ENCODE measurements at regions of chr10 and their contacts with region 1.

Region 1: DNA sequence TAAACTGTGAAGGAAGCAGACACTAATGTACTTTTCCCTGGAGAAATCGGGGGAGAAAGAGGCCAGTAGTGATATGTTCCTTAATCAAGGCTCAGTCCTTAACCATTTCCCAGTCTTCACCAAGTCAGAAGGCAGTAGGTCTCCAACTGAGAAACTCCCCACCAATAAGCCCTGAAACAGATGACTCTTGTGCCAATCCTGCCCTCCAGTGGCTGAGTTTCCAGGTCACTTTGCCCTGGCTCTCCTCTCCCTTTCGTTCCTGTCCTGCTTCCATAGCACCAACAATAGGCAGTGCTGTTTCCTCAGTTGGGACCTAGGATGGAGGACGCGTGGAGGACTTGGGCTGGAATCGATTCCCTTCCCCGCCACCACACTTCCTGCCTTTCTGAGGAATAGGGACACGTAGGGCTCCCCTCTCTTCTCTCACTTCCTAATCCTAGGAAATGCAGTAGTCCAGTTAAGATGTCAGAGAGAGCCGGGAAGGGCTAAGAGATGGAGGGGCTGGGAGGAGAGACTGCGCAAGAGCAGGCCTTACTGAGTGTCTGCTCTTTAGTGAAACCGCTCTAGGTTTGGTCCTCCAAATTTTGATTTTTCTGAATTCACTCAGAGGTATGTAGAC is 23.4 kb downstream of the ATOH7 start:
- DNase-seq: peak; percentile 57
- H3K4me3 Mint-ChIP-seq: no peak overlapping the region
- H3K27ac Mint-ChIP-seq: no peak overlapping the region
- H3K4me1 Mint-ChIP-seq: no peaks in the 10 kb centered on the region
- H3K27me3 Mint-ChIP-seq: peaks cover 8% of the 10 kb centered on the region

Region 2: DNA sequence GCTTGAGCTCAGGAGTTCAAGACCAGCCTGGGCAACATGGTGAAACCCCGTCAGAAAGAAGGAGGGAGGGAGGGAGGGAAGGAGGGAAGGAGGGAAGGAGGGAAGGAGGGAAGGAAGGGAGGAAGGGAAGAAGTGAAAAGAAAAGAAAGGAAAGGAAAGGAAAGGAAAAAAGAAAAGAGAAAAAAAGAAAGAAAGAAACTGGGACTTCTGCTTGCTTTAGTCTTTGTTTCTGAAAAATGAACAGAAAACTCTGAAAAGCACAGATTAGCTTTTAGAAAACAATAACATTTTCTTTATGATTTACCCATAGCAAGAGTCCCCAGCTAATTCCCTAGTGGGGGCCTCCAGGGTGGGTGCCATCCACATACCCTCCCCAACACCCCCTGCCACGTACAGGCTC is 23.4 kb before region 1 on chr10:
- CTCF ChIA-PET with region 1: no interaction called
- POLR2A ChIA-PET with region 1: no interaction called
- intact Hi-C with region 1: no loop called
- DNase-seq: no peak
- H3K4me3 Mint-ChIP-seq: no peak overlapping the region
- H3K27ac Mint-ChIP-seq: no peak overlapping the region
- H3K4me1 Mint-ChIP-seq: no peaks in the 10 kb centered on the region
- H3K27me3 Mint-ChIP-seq: peaks cover 22% of the 10 kb centered on the region

Region 3: GRCh38 chr10:68196701-68197100 is 11.8 kb before region 1 on chr10:
- CTCF ChIA-PET with region 1: interaction called, 13 read pairs
- POLR2A ChIA-PET with region 1: no interaction called
- intact Hi-C with region 1: no loop called
- DNase-seq: no peak
- H3K4me3 Mint-ChIP-seq: no peak overlapping the region
- H3K27ac Mint-ChIP-seq: no peak overlapping the region
- H3K4me1 Mint-ChIP-seq: no peaks in the 10 kb centered on the region
- H3K27me3 Mint-ChIP-seq: peaks cover 29% of the 10 kb centered on the region

Region 4: GRCh38 chr10:68223535-68224165 is 15.1 kb after region 1 on chr10:
- CTCF ChIA-PET with region 1: interaction called, 18 read pairs
- POLR2A ChIA-PET with region 1: no interaction called
- intact Hi-C with region 1: no loop called
- DNase-seq: peak; percentile 12
- H3K4me3 Mint-ChIP-seq: no peak overlapping the region
- H3K27ac Mint-ChIP-seq: no peak overlapping the region
- H3K4me1 Mint-ChIP-seq: no peaks in the 10 kb centered on the region
- H3K27me3 Mint-ChIP-seq: peaks cover 6% of the 10 kb centered on the region

Region 5: DNA sequence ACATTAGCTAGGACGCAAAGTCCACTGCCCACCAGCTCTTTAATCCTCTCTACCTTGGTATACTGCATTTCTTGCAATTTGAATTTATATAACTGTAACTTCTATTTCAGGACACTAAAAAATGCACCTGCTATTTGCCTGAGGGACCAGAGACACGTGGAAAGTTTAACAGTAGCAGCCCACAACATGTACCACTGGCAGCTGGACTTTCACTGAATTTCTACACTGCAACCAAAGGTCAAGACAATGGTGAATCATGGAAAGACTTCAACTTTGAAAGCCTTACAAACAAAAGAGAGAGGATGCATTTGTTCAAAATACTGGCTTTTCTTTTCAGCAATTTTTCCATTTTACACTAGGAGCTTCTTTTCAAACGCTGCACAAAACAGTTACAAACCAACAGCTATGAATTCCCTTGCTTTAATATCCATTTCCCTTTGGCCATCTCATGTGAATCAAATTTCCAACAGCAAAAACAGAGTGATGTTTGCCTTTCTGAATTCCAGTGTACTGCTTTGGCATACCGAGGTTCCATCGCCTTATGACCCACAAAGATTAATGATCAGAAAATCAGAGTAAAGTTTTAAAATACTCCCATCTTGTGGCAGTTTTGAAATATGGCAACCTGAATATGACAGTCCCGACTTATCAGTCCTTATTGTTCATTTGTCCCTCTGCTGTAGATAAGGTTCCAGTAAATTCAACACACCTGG is 93.4 kb after region 1 on chr10:
- CTCF ChIA-PET with region 1: interaction called, 62 read pairs
- POLR2A ChIA-PET with region 1: no interaction called
- intact Hi-C with region 1: loop called (anchors 2 kb)
- DNase-seq: no peak
- H3K4me3 Mint-ChIP-seq: no peak overlapping the region
- H3K27ac Mint-ChIP-seq: no peak overlapping the region
- H3K4me1 Mint-ChIP-seq: no peaks in the 10 kb centered on the region
- H3K27me3 Mint-ChIP-seq: no peaks in the 10 kb centered on the region

Region 6: DNA sequence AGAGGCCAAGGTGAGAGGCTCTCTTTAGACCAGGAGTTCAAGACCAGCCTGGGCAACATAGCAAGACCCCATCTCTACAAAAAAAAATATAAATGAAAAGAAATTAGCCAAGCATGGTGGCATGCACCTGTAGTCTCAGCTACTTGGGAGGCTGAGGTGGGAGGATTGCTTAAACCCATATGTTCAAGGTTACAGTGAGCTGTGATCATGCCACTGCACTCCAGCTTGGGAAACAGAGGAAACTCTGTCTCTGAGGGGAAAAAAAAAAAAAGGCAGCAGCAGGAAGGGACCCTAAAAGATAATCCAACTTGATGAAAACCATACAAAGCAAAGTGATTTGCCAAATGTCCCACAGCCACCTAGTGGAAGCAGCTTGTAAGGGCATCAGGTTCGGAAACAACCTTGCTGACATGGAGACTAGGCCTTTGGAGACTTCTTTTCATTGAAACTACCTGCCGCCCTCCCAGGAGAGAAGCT is 139.8 kb after region 1 on chr10:
- CTCF ChIA-PET with region 1: interaction called, 26 read pairs
- POLR2A ChIA-PET with region 1: no interaction called
- intact Hi-C with region 1: loop called (anchors 2 kb)
- DNase-seq: peak; percentile 58
- H3K4me3 Mint-ChIP-seq: no peak overlapping the region
- H3K27ac Mint-ChIP-seq: peak overlapping the region; percentile 29
- H3K4me1 Mint-ChIP-seq: peaks cover 10% of the 10 kb centered on the region
- H3K27me3 Mint-ChIP-seq: no peaks in the 10 kb centered on the region